ENCODE measurements at regions of chr9 and their contacts with region 1.

Region 1: DNA sequence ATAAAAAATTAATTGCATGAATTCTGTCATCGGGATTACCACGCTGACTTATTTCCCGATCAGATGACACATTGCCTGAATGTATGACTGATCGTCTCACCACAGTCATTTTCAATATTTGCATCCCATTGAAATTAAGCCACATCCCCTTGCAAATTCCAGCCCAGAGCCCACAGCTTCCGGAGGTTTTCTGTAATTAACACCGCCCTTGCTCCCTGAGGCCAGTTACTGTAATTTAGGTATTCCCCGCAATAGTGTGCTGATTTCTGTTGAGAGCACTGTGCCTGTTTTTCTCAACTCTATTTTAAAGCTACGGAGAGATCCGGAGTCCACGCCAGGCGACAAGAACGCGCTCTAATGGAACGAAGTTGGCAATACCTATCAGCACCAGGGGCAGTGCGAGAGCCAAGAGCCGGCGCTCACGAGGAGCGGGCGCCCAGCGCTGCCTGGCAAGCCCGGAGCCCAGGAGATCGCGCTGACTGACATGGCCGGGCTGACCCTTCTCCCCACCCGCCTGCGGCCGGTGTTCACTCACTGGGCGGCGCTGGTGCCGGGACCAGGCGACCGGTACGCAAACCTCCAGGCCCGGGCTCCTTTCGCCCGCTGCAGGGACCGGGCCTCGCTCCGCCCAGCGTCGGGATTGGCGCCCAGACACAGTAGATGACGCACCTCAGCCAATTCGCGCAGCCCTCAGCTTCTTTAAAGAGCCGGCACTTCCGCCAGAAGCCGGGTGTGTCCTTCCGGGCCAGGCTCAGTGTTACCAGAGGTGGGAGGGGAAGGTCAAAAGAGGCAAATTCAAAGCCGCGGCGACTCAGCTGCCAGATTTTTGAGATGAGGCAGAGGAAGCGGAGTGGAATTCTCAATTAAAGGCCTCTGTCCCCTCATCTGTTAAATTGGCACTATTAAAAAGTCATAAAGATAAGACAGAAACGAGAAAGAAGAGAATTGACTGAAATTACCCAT is at the start of gene PLGRKT:
- DNase-seq: peak; percentile 95
- ATAC-seq: peak; percentile 96
- H3K4me3 Mint-ChIP-seq: peak within 1 kb of the TSS; percentile 97
- H3K27ac Mint-ChIP-seq: peak within 1 kb of the TSS; percentile 97
- H3K4me1 Mint-ChIP-seq: peaks cover 40% of the 10 kb centered on the region
- H3K27me3 Mint-ChIP-seq: no peaks in the 10 kb centered on the region
- CTCF ChIP-seq: no peak
- total RNA-seq, gene PLGRKT: 26.6 to 28.5 TPM

Region 2: DNA sequence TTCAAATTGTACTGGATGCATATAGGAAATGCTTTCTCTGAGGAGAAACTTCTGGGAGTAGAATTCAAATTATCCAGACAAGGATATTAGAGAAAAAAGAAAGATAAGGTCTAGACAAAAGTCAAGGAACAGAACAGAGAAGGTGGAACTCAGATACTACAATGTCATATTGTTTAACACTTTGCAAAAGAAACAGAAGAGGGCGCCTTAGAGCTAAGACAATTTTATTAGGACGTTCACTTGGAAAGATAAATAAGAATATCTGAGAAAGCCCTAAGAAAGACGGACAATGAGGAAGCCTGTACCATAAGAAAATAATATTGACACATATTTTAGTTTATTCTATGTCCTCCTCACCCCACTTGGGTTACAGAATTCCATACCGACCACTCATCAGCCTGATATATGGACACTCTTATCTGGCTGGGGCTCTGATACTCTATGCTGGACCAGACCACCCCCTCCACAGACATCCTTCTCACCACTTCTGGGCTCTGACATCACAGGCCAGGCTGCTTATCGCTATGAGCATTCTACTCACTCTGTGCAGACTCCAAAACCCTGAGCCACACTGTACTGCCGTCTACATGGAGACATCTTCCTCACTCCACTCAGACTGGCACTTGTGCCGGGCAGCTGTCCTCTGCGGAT is 687.4 kb before region 1 on chr9:
- CTCF ChIA-PET with region 1: no interaction called
- POLR2A ChIA-PET with region 1: no interaction called
- intact Hi-C with region 1: loop called (anchors 10 kb)
- DNase-seq: no peak
- ATAC-seq: peak; percentile 61
- H3K4me3 Mint-ChIP-seq: no peak overlapping the region
- H3K27ac Mint-ChIP-seq: no peak overlapping the region
- H3K4me1 Mint-ChIP-seq: peaks cover 19% of the 10 kb centered on the region
- H3K27me3 Mint-ChIP-seq: no peaks in the 10 kb centered on the region
- CTCF ChIP-seq: peak; percentile 47

Region 3: GRCh38 chr9:5326893-5327548 is 110.5 kb before region 1 on chr9:
- CTCF ChIA-PET with region 1: no interaction called
- POLR2A ChIA-PET with region 1: no interaction called
- intact Hi-C with region 1: loop called (anchors 10 kb)
- DNase-seq: peak; percentile 68
- ATAC-seq: peak; percentile 84
- H3K4me3 Mint-ChIP-seq: peak overlapping the region; percentile 36
- H3K27ac Mint-ChIP-seq: peak overlapping the region; percentile 30
- H3K4me1 Mint-ChIP-seq: peaks cover 24% of the 10 kb centered on the region
- H3K27me3 Mint-ChIP-seq: no peaks in the 10 kb centered on the region
- CTCF ChIP-seq: no peak

Region 4: DNA sequence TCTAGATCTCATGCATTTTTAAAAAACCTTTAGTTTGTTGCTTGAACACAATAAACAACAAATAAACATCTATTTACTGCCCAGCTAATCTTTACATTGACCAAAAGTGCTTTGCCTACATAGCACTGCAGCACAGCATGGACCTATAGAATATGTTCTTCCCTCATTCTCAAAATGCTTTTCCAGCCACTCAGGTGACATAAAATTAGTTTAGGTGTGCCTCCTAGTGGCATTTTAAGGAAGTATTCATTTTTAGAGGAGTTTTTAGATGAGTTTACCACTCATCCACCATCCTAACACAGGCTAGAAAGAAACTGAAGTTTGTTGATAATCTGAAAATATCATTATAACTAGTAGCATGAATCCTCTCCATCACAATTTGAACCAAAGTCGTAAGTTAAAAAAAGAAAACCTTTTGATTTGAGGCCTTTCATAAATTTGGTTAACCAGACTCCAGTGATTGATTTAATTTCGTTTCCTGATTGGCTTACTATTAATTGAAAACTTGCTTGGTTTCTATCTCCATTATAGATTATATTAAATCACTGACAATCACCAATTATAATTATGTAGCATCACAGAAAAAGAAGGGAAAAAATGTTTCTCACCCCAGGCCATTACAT is 12.4 kb before region 1 on chr9:
- CTCF ChIA-PET with region 1: interaction called, 22 read pairs
- POLR2A ChIA-PET with region 1: interaction called, 3 read pairs
- intact Hi-C with region 1: no loop called
- DNase-seq: no peak
- ATAC-seq: peak; percentile 73
- H3K4me3 Mint-ChIP-seq: no peak overlapping the region
- H3K27ac Mint-ChIP-seq: no peak overlapping the region
- H3K4me1 Mint-ChIP-seq: peaks cover 9% of the 10 kb centered on the region
- H3K27me3 Mint-ChIP-seq: no peaks in the 10 kb centered on the region
- CTCF ChIP-seq: peak; percentile 80

Region 5: DNA sequence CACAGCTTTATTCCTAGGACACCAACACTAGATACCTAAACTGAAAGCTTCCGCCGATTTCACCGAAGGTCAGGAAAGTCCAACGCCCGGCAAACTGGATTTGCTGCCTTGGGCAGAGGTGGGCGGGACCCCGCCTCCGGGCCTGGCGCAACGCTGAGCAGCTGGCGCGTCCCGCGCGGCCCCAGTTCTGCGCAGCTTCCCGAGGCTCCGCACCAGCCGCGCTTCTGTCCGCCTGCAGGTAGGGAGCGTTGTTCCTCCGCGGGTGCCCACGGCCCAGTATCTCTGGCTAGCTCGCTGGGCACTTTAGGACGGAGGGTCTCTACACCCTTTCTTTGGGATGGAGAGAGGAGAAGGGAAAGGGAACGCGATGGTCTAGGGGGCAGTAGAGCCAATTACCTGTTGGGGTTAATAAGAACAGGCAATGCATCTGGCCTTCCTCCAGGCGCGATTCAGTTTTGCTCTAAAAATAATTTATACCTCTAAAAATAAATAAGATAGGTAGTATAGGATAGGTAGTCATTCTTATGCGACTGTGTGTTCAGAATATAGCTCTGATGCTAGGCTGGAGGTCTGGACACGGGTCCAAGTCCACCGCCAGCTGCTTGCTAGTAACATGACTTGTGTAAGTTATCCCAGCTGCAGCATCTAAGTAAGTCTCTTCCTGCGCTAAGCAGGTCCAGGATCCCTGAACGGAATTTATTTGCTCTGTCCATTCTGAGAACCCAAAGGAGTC is 13.0 kb after region 1 on chr9 and contains the start of gene CD274:
- CTCF ChIA-PET with region 1: interaction called, 18 read pairs
- POLR2A ChIA-PET with region 1: interaction called, 14 read pairs
- intact Hi-C with region 1: no loop called
- DNase-seq: peak; percentile 91
- ATAC-seq: peak; percentile 79
- H3K4me3 Mint-ChIP-seq: peak within 1 kb of the TSS; percentile 93
- H3K27ac Mint-ChIP-seq: peak within 1 kb of the TSS; percentile 92
- H3K4me1 Mint-ChIP-seq: peaks cover 75% of the 10 kb centered on the region
- H3K27me3 Mint-ChIP-seq: no peaks in the 10 kb centered on the region
- CTCF ChIP-seq: peak; percentile 64
- total RNA-seq, gene CD274: 12.2 to 13.7 TPM

Region 6: DNA sequence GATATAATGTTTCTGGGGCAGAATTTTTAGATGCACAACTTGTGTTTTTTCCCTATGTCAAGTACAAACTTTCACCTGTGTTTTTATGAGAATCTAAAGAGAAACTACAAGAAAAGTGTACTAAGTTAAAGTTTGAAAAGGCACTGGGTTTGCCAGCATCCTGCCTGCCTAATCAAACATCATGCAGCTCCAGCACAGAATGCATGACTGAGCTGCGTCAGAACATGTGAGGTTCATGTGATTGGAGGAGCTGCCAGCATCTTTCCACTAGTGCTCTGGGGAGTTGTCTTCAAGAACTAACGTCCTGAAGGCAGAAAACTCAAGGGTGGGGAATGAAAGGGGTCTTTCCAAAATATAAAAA is 145.3 kb after region 1 on chr9:
- CTCF ChIA-PET with region 1: interaction called, 43 read pairs
- POLR2A ChIA-PET with region 1: interaction called, 4 read pairs
- intact Hi-C with region 1: no loop called
- DNase-seq: peak; percentile 67
- ATAC-seq: peak; percentile 62
- H3K4me3 Mint-ChIP-seq: no peak overlapping the region
- H3K27ac Mint-ChIP-seq: peak overlapping the region; percentile 82
- H3K4me1 Mint-ChIP-seq: peaks cover 50% of the 10 kb centered on the region
- H3K27me3 Mint-ChIP-seq: no peaks in the 10 kb centered on the region
- CTCF ChIP-seq: no peak

Measured in activated CD8-positive, alpha-beta T cell treated with anti-CD3 and anti-CD28 coated beads for 36 hours (primary cell).